Caco-2 (cell line): ENCODE measurements at regions of chr5 and their contacts with region 1.

Region 1: DNA sequence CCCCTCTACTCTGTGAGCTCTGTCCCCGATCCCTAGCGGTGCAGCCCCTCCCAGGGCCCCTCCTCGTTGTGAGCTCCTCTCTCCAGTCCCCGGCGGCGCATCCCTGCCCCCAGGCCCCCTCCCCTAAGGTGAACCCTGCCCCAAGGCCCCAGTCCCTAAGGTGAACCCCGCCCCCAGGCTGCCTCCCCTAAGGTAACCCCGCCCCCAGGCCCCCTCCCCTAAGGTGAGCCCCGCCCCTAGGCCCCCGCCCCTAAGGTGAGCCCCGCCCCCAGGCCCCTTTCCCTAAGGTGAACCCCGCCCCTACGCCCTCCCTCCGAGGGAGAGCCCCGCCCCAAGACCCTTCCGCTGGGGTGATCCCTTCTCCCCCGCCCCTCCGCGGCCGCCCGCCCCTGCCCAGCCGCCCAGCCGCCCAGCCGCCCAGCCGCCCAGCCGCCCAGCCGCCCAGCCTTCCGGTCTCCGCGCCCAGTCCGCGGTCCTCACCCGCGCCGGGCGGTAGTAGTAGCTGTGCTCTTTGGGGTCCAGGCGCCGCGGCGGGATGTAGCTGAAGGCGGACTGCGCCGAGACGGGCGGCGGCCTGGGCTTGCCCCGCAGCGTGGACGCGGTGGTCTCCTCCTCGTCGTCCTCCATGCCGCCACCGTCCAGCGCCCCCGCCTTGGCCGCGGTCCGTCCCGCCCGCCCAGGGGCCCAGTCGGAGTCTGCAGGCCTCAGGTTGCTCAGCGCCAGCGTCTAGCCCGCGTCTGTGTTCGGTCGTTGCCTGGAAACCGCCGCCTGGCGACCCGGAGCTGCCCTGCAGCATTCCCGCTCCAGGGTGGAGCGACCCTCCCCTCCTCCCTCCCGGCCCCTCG is at the start of gene CFAP90:
- DNase-seq: peak; percentile 80 to 90
- H3K4me3 ChIP-seq: peak within 1 kb of the TSS; percentile 72
- H3K4me3 Mint-ChIP-seq: peak within 1 kb of the TSS; percentile 79
- H3K27ac Mint-ChIP-seq: peak within 1 kb of the TSS; percentile 55
- H3K4me1 ChIP-seq: no peaks in the 10 kb centered on the region; the same call in 1 of the 2 replicates
- H3K4me1 Mint-ChIP-seq: no peaks in the 10 kb centered on the region
- H3K27me3 ChIP-seq: no peaks in the 10 kb centered on the region
- H3K27me3 Mint-ChIP-seq: peaks cover 10% of the 10 kb centered on the region
- CTCF ChIP-seq: peak; percentile 49 to 71
- total RNA-seq, gene CFAP90: 0.29 TPM in 1 of 2 replicates, not detected in the other

Region 2: DNA sequence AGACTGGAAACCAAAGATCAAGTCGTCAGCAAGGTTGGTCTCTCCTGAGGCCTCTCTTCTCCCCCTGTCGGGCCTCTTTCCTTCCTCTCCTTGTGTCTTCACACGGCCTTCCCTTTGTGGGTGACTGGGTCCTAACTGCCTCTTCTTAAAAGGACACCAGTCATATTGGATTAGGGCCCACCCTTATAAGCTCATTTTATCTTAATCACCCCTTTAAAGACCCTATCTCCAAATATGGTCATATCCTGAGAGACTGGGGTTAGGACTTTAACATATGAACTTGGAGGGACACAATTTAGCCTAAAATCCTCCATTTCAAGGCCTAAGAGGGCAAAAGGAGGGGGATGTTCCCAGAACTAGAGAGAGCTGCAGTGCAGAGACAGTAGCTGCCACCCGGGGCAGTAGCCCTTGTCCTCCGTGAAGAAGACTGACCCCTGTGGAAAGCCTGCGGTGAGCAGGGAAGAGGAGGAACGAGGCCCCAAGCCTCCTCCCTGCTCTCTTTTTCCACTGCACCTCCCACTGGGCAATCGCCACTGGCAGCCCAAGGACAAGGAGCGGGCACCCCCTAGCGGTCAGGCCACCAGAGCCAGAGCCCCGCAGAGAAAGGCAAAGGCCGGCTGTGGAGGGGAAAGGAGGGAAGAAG is 34.6 kb before region 1 on chr5:
- CTCF ChIA-PET with region 1: interaction called, 10 read pairs
- POLR2A ChIA-PET with region 1: no interaction called
- intact Hi-C with region 1: loop called (anchors 2 kb)
- DNase-seq: peak; percentile 72 to 83
- H3K4me3 ChIP-seq: no peak overlapping the region
- H3K4me3 Mint-ChIP-seq: no peak overlapping the region
- H3K27ac Mint-ChIP-seq: no peak overlapping the region
- H3K4me1 ChIP-seq: no peaks in the 10 kb centered on the region
- H3K4me1 Mint-ChIP-seq: no peaks in the 10 kb centered on the region
- H3K27me3 ChIP-seq: no peaks in the 10 kb centered on the region; the same call in 1 of the 2 replicates
- H3K27me3 Mint-ChIP-seq: peaks cover 24% of the 10 kb centered on the region
- CTCF ChIP-seq: peak; percentile 77 to 91

Region 3: GRCh38 chr5:7868773-7869473 is 18.3 kb after region 1 on chr5 and contains the starts of genes FASTKD3 and MTRR:
- CTCF ChIA-PET with region 1: interaction called, 10 read pairs
- POLR2A ChIA-PET with region 1: interaction called, 3 read pairs
- intact Hi-C with region 1: loop called (anchors 1 kb)
- DNase-seq: peak; percentile 91 to 92
- H3K4me3 ChIP-seq: peak within 1 kb of the TSS; percentile 95
- H3K4me3 Mint-ChIP-seq: peak within 1 kb of the TSS; percentile 96
- H3K27ac Mint-ChIP-seq: peak within 1 kb of the TSS; percentile 77
- H3K4me1 ChIP-seq: 0 out of 2 replicates have a peak, but pooled peaks cover 7% of the 10 kb centered on the region
- H3K4me1 Mint-ChIP-seq: no peaks in the 10 kb centered on the region
- H3K27me3 ChIP-seq: no peaks in the 10 kb centered on the region
- H3K27me3 Mint-ChIP-seq: no peaks in the 10 kb centered on the region
- CTCF ChIP-seq: no peak
- total RNA-seq, gene FASTKD3: 14.2 and 15.4 TPM in 2 replicates
- total RNA-seq, gene MTRR: 50.1 and 57.6 TPM in 2 replicates